Psoas muscle (tissue), 8 donors: ENCODE measurements at regions of chr10 and their contacts with region 1.

Region 1: DNA sequence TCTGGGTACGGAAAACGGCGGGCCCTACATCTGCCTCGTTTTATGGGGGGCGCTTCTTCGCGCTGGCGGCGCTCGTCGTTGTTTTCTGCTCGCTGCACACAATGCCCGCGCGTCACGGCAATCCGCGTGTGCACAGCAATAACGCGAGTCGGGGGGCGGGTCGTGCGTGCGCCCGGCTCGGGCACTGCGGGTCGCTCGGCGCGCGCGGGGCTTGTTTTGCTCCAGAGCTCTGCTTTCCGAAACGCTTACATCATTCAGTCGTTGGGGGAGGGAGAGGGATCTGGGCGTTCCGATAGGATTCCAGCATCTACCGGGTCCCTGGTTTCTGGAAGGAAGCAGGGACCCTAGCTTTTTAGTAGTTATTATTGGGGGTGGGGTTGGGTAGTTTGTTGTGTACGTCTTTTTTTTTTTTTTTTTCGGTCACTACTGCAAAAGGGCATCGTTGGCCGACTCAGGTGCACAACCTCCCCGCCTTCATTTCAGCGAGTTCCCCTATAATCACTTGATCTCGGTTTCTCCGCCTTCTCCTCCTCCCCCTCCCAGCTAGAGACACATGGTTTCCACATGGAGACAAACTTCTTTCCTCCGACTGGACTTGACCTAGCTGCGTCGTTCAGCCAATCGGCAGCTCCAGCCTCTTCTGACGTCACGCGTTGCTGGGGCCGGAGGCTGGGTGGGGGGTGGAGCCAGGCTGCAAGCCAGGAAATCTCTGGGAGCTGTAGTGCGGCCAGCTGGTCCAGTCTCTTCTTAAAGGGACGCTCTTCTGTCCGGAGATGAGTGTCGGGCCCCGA is 3.5 kb downstream of the MXI1 start:
- DNase-seq: peak; percentile 94 to 99
- ATAC-seq: peak; percentile 91 to 93 (median 92)
- H3K4me3 ChIP-seq: peak overlapping the region; percentile 94
- H3K27ac ChIP-seq: peak overlapping the region; percentile 98
- H3K4me1 ChIP-seq: peaks cover 18% of the 10 kb centered on the region
- H3K27me3 ChIP-seq: no peaks in the 10 kb centered on the region
- CTCF ChIP-seq: no peak

Region 2: GRCh38 chr10:110103921-110104461 is 106.9 kb before region 1 on chr10:
- intact Hi-C with region 1: no loop called
- DNase-seq: no peak
- ATAC-seq: no peak
- H3K4me3 ChIP-seq: no peak overlapping the region
- H3K27ac ChIP-seq: no peak overlapping the region
- H3K4me1 ChIP-seq: no peaks in the 10 kb centered on the region
- H3K27me3 ChIP-seq: no peaks in the 10 kb centered on the region
- CTCF ChIP-seq: no peak

Region 3: DNA sequence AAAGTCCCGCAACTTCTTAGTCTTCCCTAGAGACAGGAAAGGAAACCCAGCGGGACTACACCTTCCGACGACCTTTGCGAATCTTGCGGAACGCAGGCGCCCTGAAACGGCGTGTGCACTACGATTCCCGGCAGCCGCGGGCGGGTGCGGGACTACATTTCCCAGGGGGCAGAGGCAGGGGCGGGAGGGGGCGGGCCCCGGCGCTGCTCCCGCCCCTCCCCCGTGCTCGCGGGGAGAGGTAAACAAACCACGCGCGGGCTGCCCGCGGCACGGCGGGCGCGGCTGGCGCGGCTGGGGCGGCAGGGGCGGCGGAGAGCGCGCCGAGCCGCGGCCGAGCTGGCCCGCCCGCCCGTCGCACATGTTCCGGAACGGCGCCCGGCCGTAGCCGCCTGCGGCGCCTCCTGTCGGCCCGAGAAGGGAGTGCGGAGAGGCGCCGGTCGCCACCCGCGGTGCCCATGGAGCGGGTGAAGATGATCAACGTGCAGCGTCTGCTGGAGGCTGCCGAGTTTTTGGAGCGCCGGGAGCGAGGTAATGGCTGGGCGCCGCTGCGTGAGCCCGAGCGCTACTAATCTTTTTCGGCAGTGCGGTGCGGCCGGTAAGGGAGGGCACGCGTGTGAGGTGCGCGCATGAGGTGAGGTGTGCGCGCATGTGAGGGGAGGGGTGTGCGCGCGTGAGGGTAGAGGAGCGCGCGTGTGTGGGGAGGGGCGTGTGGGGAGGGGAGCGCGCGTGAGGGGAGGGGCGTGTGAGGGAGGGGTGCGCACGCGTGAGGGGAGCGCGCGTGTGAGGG is 15.1 kb after region 1 on chr10:
- intact Hi-C with region 1: loop called in 1 of 2 experiments (anchors 2 kb)
- DNase-seq: peak; percentile 91 to 95
- ATAC-seq: peak; percentile 73 to 78 (median 77)
- H3K4me3 ChIP-seq: peak overlapping the region; percentile 96
- H3K27ac ChIP-seq: peak overlapping the region; percentile 99
- H3K4me1 ChIP-seq: peaks cover 23% of the 10 kb centered on the region
- H3K27me3 ChIP-seq: no peaks in the 10 kb centered on the region
- CTCF ChIP-seq: peak; percentile 77

Region 4: GRCh38 chr10:110279407-110279986 is 68.6 kb after region 1 on chr10:
- intact Hi-C with region 1: loop called (anchors 5 kb)
- DNase-seq: peak in 1 of 2 donors; percentile 30
- ATAC-seq: peak in 3 of 4 donors; percentile 71 to 87 (median 79)
- H3K4me3 ChIP-seq: no peak overlapping the region
- H3K27ac ChIP-seq: no peak overlapping the region
- H3K4me1 ChIP-seq: peaks cover 39% of the 10 kb centered on the region
- H3K27me3 ChIP-seq: no peaks in the 10 kb centered on the region
- CTCF ChIP-seq: peak; percentile 77

Region 5: DNA sequence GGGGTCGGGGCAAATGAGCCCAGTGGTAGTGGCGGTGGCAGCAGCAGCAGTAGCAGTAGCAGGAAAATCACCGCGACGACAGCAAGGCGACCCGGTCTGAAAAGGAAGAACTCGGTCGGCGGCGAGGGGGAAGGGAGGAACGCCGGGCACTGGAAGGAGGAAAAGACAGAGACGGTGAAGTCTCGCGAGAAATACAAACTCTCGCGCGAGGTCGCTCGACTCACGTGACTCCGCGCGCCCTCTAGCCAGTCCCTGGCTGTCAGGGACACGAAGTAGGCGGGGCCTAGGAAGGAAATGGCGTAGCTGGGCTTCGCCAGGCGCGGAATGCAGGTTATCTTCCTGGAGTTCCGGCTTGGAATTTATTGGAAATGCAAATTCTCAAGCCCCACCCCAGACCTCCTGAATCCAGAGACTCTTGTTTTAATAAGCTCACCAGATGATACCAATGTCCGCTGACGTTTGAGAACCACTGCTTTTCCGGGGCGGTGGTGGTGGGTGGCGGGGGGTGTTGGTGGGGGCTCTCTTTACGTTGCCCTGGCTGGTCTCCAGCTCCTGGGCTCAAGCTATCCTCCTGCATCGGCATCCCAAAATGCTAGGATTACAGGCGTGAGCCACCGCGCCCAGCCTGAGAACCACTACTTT is 94.0 kb after region 1 on chr10 and contains the start of gene SMNDC1:
- intact Hi-C with region 1: no loop called
- DNase-seq: peak; percentile 97 to 98
- ATAC-seq: peak; percentile 94 to 98 (median 95)
- H3K4me3 ChIP-seq: peak within 1 kb of the TSS; percentile 74
- H3K27ac ChIP-seq: peak within 1 kb of the TSS; percentile 88
- H3K4me1 ChIP-seq: peaks cover 51% of the 10 kb centered on the region
- H3K27me3 ChIP-seq: no peaks in the 10 kb centered on the region
- CTCF ChIP-seq: no peak
- total RNA-seq, gene SMNDC1: 24.4 to 38.0 (median 29.2) TPM

Region 6: GRCh38 chr10:110567201-110568054 is 356.6 kb after region 1 on chr10 and contains the start of gene SMC3:
- intact Hi-C with region 1: loop called in 1 of 2 experiments (anchors 10 kb)
- DNase-seq: peak; percentile 93 to 95
- ATAC-seq: peak; percentile 96 to 98 (median 96)
- H3K4me3 ChIP-seq: peak within 1 kb of the TSS; percentile 90
- H3K27ac ChIP-seq: peak within 1 kb of the TSS; percentile 85
- H3K4me1 ChIP-seq: peaks cover 35% of the 10 kb centered on the region
- H3K27me3 ChIP-seq: no peaks in the 10 kb centered on the region
- CTCF ChIP-seq: no peak
- total RNA-seq, gene SMC3: 18.4 to 20.6 (median 19.5) TPM